ENCODE measurements at regions of chr5 and their contacts with region 1.

Region 1: GRCh38 chr5:97019435-97020117 is 83.7 kb downstream of the LNPEP start:
- DNase-seq: no peak
- ATAC-seq: no peak
- H3K4me3 ChIP-seq: no peak overlapping the region
- H3K27ac ChIP-seq: no peak overlapping the region
- H3K4me1 ChIP-seq: no peaks in the 10 kb centered on the region
- H3K27me3 ChIP-seq: no peaks in the 10 kb centered on the region

Region 2: GRCh38 chr5:96763026-96763425 is 256.6 kb before region 1 on chr5:
- intact Hi-C with region 1: loop called in 2 of 4 experiments (anchors 5 to 10 kb)
- DNase-seq: no peak
- ATAC-seq: no peak
- H3K4me3 ChIP-seq: no peak overlapping the region
- H3K27ac ChIP-seq: no peak overlapping the region
- H3K4me1 ChIP-seq: no peaks in the 10 kb centered on the region
- H3K27me3 ChIP-seq: no peaks in the 10 kb centered on the region

Region 3: GRCh38 chr5:97149709-97150108 is 130.1 kb after region 1 on chr5:
- intact Hi-C with region 1: loop called in 1 of 4 experiments (anchors 10 kb)
- DNase-seq: no peak
- ATAC-seq: no peak
- H3K4me3 ChIP-seq: no peak overlapping the region
- H3K27ac ChIP-seq: no peak overlapping the region
- H3K4me1 ChIP-seq: no peaks in the 10 kb centered on the region
- H3K27me3 ChIP-seq: no peaks in the 10 kb centered on the region